Left cardiac atrium (tissue), 4 donors: ENCODE measurements at regions of chr13 and their contacts with region 1.

Region 1: DNA sequence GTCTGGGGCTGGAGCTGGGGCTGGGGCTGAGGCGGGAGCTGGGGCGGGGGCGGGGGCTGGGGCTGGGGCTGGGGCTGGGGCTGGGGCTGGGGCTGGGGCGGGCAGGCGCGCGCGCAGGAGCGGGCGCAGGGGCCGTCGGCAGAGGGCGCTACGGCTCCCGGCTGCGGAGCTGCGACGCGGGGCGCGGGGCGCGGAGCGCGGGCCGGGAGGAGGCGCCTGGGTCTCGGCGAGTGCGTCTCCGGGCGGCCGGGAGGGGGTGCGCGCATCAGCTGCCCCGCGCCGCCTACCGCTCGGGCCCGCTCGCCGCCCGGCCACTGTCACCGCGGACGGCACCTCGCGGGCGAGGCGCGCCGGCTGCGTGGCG is 422 bp upstream of the MTUS2 start:
- DNase-seq: peak; percentile 75
- ATAC-seq: peak; percentile 91 to 93

Region 2: GRCh38 chr13:28282451-28282850 is 537.3 kb before region 1 on chr13:
- intact Hi-C with region 1: no loop called
- DNase-seq: no peak
- ATAC-seq: no peak

Region 3: DNA sequence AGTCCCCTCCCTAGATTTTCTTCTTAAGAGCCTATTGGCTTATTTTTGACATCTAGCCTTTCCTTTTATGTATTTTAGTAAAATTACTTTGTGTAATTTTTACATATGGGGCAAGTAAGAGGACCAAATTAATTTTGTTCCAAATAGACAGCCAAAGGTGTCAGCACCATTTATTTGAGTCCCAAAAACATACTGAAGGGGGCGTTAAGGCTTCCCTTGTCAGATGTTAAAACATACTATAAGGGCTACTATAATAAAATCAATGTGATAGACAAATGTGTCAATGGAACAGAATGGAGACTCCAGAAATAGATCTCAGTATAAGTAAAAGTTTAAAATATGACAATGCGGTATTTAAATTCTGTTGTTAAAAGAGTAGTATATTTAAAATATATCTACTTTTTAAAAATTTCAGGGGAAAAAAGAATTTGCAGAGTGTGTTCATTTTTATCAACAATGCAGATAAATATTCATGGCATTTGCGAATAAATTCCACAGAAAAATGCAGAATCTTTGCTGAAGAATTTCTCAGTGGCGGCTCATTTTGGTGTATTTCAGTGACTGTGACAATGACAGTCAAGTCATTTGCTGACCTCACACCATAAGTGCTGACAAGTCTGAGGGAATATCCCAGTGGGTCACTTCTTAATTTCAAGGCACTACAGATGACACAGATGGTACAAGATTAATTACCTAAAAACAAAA is 134.1 kb after region 1 on chr13:
- intact Hi-C with region 1: loop called in 1 of 2 experiments (anchors 5 kb)
- DNase-seq: no peak
- ATAC-seq: no peak

Region 4: DNA sequence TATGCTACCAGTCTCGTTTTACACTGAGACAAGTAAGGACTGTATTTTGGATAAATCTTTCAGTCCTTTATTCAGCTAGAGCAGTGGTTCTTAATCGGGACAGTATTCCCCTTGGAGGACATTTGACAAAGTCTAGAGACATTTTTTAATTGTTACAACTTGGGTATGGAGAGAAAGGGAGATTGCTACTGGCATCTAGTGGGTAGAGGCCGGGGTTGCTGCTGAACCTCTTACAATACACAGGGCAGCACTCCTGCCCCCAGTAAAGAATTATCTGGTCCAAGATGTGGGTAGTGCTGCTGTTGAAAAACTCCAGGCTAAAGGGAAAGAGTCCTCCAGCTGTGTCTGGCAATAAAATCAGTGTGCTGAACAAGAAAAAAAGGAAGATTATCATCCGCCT is 441.0 kb after region 1 on chr13:
- intact Hi-C with region 1: loop called (anchors 2 to 10 kb)
- DNase-seq: no peak
- ATAC-seq: peak; percentile 55 to 71

Region 5: DNA sequence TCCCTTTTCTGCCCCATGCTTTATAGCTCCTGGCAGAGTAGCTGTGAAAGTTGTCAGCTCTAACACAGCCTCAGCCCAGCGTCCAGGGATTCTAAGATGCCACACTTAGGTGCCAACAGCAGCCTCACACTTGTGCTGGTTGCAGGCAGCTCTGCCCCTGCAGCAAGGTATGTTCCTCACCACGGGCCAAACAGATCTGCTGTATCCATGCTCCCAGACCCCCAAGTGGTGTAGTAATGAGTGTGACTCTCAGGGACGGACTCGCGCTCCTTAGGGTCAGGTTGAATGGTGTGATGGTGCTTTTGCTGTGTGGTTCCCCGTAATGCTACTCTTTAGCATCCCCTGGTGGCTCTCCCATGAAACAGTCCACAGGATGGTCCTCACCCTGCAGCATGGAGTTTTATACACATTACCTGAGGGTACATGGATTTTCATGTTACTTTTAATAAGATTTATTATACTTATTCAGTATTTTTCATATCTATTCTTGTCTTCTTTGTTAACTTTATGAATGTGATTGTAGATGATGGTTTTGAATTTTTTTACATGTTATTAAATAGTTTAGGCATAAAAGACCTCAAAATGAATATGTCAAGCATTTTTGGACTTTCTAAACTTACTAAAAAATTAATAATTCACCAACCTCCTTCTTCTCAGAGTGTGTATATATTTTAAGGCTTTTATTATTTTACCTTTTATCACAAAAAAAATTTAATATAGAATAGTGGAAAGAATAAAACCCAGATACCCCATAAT is 543.3 kb after region 1 on chr13:
- intact Hi-C with region 1: loop called (anchors 5 to 10 kb)
- DNase-seq: peak; percentile 31
- ATAC-seq: peak; percentile 87 to 94

Region 6: GRCh38 chr13:29369060-29369743 is 549.5 kb after region 1 on chr13:
- intact Hi-C with region 1: loop called (anchors 5 to 10 kb)
- DNase-seq: no peak
- ATAC-seq: peak; percentile 34 to 55